ENCODE measurements at regions of chr6 and their contacts with region 1.

Region 1: GRCh38 chr6:132530293-132530974 is 7.6 kb upstream of the TAAR9 start:
- DNase-seq: peak; percentile 70
- ATAC-seq: peak; percentile 75
- H3K4me3 ChIP-seq: peak overlapping the region; percentile 66
- H3K27ac ChIP-seq: no peak overlapping the region
- H3K4me1 ChIP-seq: peaks cover 26% of the 10 kb centered on the region
- H3K27me3 ChIP-seq: no peaks in the 10 kb centered on the region
- CTCF ChIP-seq: peak; percentile 69

Region 2: GRCh38 chr6:132614554-132614953 is 84.1 kb after region 1 on chr6:
- CTCF ChIA-PET with region 1: no interaction called
- POLR2A ChIA-PET with region 1: no interaction called
- intact Hi-C with region 1: loop called (anchors 1 kb)
- DNase-seq: peak; percentile 87
- ATAC-seq: peak; percentile 77
- H3K4me3 ChIP-seq: peak overlapping the region; percentile 58
- H3K27ac ChIP-seq: peak overlapping the region; percentile 88
- H3K4me1 ChIP-seq: peaks cover 57% of the 10 kb centered on the region
- H3K27me3 ChIP-seq: no peaks in the 10 kb centered on the region
- CTCF ChIP-seq: no peak

Region 3: GRCh38 chr6:132798869-132799538 is 268.6 kb after region 1 on chr6:
- CTCF ChIA-PET with region 1: no interaction called
- POLR2A ChIA-PET with region 1: no interaction called
- intact Hi-C with region 1: loop called (anchors 10 kb)
- DNase-seq: peak; percentile 77
- ATAC-seq: peak; percentile 89
- H3K4me3 ChIP-seq: no peak overlapping the region; the same call in 1 of the 2 replicates
- H3K27ac ChIP-seq: 0 out of 2 replicates have a peak overlapping the region, but pooled peaks have one; percentile 14
- H3K4me1 ChIP-seq: no peaks in the 10 kb centered on the region
- H3K27me3 ChIP-seq: no peaks in the 10 kb centered on the region
- CTCF ChIP-seq: peak; percentile 78